PC-3 (cell line): ENCODE measurements at regions of chr21 and their contacts with region 1.

Region 1: DNA sequence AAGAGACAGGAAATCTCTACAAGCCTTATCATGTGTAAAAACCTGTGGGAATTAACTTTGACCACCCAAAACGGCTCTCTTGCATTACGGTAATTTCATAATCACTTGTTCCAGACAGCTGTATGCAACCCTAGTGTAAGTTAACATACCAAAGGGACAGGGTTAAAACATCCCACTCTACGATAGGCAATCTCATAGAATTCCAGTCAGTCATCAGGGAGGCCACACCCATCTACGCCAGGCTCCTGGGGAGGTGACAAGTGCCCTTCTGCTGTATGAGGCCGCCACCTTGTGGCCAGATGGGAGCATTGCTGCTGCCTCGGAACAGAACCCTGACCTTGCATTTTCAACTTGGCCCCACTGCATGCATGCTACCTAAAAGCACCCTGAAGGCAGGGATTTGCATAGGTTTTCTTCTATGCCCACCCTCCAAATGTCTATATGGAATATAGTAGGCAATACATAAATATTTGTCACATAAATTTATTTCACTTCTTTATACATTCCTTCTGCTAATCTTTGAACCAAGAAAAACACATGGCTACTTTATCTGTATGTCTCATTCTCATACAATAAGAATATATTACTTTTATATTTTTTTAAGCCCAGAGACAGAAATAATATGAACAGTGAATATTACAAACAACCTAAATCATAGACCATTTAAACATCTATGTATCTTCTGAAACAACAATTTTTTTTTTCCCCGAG is 12.6 kb downstream of the HSF2BP start:
- DNase-seq: peak; percentile 95
- ATAC-seq: peak; percentile 78
- H3K4me3 ChIP-seq: peak overlapping the region; percentile 21; the same call in 1 of the 2 replicates
- H3K27ac ChIP-seq: peak overlapping the region; percentile 68
- H3K4me1 ChIP-seq: peaks cover 21% of the 10 kb centered on the region
- H3K27me3 ChIP-seq: no peaks in the 10 kb centered on the region
- CTCF ChIP-seq: peak; percentile 99

Region 2: DNA sequence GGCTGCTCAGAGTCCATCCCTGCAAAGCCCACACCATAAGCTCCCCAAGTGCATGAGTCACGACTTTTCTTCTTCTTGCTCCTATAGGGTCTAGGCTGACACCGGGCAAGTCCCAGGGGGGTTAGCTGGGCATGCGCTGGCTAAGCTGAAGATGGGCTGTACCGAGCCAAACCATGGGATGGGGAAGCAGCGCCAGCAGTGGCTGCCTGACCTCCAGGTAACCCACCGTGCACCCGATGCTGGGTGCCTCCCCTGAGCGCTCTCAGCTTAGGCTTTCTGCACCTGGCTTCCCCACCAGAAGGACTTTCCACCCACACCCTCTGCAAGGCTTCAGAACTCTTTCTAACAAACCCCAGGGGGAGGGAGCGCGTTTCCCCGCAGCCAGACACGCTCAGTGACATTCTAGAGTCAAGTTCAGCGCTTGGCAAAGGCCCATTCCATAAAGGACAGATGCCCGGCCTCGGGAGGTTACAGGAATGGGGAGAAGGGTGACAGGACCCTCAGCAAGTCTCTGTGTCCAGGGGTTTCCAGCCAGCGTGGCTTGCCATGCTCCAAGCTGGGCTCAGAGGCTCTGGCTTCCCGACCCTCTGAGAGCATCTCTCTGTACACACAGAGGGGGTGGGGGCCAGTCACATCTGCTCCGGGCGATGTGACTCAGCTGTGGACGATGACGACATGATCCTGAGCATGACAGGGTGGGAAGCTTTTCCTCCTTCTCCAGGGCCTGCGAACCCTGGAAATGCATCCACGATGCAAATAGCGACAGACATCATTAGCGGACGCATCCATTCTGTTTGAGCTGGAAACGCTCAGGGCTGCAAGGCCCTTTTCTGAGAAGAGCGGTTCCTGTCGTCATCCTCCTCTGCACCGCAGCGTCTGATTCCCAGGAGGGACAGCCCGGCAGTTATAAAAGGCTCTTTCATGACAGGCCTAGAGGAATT is 327.6 kb before region 1 on chr21:
- CTCF ChIA-PET with region 1: no interaction called
- POLR2A ChIA-PET with region 1: no interaction called
- intact Hi-C with region 1: loop called (anchors 10 kb)
- DNase-seq: peak; percentile 62
- ATAC-seq: peak; percentile 76
- H3K4me3 ChIP-seq: no peak overlapping the region
- H3K27ac ChIP-seq: no peak overlapping the region
- H3K4me1 ChIP-seq: peaks cover 9% of the 10 kb centered on the region
- H3K27me3 ChIP-seq: no peaks in the 10 kb centered on the region
- CTCF ChIP-seq: no peak

Region 3: GRCh38 chr21:43333298-43334062 is 313.2 kb before region 1 on chr21:
- CTCF ChIA-PET with region 1: no interaction called
- POLR2A ChIA-PET with region 1: no interaction called
- intact Hi-C with region 1: loop called (anchors 5 kb)
- DNase-seq: peak; percentile 95
- ATAC-seq: peak; percentile 92
- H3K4me3 ChIP-seq: peak overlapping the region; percentile 62
- H3K27ac ChIP-seq: peak overlapping the region; percentile 97
- H3K4me1 ChIP-seq: peaks cover 29% of the 10 kb centered on the region
- H3K27me3 ChIP-seq: no peaks in the 10 kb centered on the region
- CTCF ChIP-seq: no peak

Region 4: DNA sequence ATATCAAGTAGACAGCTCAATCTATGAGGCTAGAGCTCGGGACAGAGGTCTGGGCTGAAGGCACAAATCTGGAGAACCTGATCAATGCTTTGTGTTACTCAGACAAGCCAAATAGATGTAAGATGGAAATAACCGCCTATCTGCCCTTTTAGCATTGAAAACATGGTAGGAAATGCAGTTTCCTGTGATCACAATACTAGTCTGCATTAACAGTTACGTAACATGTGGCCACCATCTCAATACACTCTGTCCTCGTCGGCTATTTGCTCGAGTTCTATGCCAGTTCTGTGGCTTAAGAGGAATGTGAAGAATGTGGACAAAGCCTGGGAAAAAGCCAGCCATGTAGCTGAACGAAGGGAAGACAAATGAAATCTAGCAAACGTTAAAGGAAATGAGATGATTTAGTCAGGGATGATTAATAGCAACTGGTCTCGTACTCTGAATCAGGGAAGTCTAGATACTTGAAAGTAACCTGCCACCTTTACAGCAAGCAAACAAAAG is 60.7 kb before region 1 on chr21:
- CTCF ChIA-PET with region 1: no interaction called
- POLR2A ChIA-PET with region 1: no interaction called
- intact Hi-C with region 1: loop called (anchors 1 kb)
- DNase-seq: peak; percentile 100
- ATAC-seq: peak; percentile 99
- H3K4me3 ChIP-seq: no peak overlapping the region; the same call in 1 of the 2 replicates
- H3K27ac ChIP-seq: peak overlapping the region; percentile 96
- H3K4me1 ChIP-seq: peaks cover 44% of the 10 kb centered on the region
- H3K27me3 ChIP-seq: no peaks in the 10 kb centered on the region
- CTCF ChIP-seq: no peak

Region 5: DNA sequence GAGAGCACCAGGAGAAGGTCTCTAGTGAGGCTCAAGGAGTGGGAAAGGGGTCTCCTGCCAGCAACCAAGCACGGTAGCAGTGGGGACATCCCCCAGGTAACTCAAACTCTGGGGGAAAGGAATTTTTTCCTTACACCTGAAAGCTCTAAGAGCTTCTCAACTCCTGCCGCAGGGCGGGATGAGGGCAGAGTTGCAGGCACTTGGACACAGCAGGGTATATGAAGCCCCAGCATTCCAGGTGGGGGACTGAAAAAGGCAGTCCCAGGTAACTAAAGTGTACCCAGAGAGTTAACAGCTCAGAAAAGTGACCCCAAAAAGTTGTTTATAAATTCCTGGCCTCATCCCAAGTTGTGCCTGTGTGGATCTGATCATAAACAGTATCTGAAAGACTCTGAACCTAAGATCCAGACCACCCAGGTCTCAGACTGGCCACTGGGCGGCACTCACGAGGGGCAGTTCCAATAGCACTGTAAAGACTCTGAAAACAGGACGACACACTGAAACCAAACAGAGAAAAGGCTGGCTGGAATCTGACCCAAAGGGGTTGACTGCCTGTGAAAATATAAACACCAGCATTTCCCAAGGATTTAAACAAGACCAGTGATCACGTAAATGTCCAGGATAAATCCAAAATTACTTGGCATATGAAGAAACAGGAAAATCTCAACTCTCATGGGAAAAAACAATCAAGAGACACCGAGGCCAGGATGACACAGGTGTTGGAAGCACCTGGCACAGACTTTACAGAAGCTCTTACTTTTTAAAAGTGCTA is 34.9 kb before region 1 on chr21:
- CTCF ChIA-PET with region 1: interaction called, 4 read pairs
- POLR2A ChIA-PET with region 1: no interaction called
- intact Hi-C with region 1: loop called (anchors 1 kb)
- DNase-seq: peak; percentile 77
- ATAC-seq: peak; percentile 91
- H3K4me3 ChIP-seq: no peak overlapping the region
- H3K27ac ChIP-seq: peak overlapping the region; percentile 8
- H3K4me1 ChIP-seq: peaks cover 44% of the 10 kb centered on the region
- H3K27me3 ChIP-seq: no peaks in the 10 kb centered on the region
- CTCF ChIP-seq: peak; percentile 95

Region 6: DNA sequence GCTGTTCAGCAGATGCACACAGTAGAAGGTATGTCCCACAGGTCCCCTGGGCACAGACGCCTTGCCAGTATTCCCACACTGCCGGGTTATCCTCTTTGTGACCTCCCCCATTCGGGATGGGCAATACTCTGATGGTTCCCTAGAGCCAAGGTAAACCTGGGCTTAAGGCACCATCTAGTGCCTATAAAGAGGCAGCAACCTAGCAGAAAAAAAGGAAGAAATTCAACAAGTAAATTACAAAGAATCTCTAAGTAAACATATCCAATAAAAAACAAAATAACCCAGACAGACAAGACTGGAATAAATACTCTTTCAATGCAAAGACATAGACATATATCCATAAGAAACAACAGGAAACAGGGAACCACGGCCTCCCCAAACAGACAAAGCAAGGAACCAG is 26.8 kb before region 1 on chr21:
- CTCF ChIA-PET with region 1: interaction called, 7 read pairs
- POLR2A ChIA-PET with region 1: no interaction called
- intact Hi-C with region 1: loop called (anchors 1 kb)
- DNase-seq: peak; percentile 56
- ATAC-seq: peak; percentile 35; the same call in 1 of the 2 replicates
- H3K4me3 ChIP-seq: no peak overlapping the region
- H3K27ac ChIP-seq: peak overlapping the region; percentile 79
- H3K4me1 ChIP-seq: peaks cover 18% of the 10 kb centered on the region
- H3K27me3 ChIP-seq: no peaks in the 10 kb centered on the region
- CTCF ChIP-seq: peak; percentile 71

Region 7: DNA sequence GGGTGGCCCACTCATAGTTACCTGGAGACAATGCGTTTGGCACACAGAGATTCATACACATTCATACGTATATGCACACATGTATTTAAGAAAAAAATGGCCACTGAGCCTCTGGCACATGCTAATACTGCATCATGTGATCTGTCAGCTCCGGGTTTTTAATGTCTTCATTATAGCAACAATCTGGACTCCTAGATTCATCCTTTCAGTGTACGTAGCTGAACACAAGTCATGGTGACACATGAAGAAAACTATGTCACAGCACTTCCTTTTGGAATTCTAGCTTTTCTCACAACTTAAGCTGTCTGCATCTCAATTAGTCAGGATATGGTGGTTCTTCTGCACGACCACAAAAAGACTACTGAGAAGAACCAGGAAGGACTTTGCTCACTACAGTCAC is 12.1 kb before region 1 on chr21:
- CTCF ChIA-PET with region 1: no interaction called
- POLR2A ChIA-PET with region 1: no interaction called
- intact Hi-C with region 1: no loop called
- DNase-seq: no peak
- ATAC-seq: no peak
- H3K4me3 ChIP-seq: no peak overlapping the region
- H3K27ac ChIP-seq: no peak overlapping the region
- H3K4me1 ChIP-seq: peaks cover 9% of the 10 kb centered on the region
- H3K27me3 ChIP-seq: no peaks in the 10 kb centered on the region
- CTCF ChIP-seq: no peak